ENCODE measurements at regions of chr15 and their contacts with region 1.

Region 1: DNA sequence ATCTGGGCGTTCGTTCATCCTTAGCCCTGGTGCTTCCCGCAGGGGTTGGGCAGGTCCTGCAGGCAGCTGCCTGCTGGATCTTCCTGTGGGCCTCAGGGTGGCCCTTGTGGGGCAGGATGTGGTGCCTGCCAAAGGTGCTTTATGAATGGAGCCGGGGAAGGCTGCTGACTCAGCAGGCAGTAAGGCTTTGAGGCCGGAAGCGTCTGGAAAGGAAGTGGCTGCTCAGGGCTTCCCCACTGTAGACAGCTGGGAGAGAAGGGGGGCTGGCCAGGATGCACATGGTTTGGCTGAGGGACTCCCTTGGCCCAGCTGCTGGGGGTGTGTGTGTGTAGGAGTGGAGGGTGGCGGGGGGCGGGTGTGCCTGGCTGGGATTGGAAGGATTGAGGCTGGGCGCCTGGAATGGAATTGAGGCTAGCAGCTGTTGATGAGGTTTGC is 12.9 kb downstream of the CD276 start:
- DNase-seq: peak; percentile 82
- H3K4me3 ChIP-seq: no peak overlapping the region
- H3K27ac ChIP-seq: peak overlapping the region; percentile 65
- H3K4me1 ChIP-seq: peaks cover 47% of the 10 kb centered on the region
- H3K27me3 ChIP-seq: no peaks in the 10 kb centered on the region
- CTCF ChIP-seq: no peak

Region 2: GRCh38 chr15:73593304-73594074 is 103.6 kb before region 1 on chr15:
- dilution Hi-C with region 1: loop called (anchors 25 kb)
- DNase-seq: no peak
- H3K4me3 ChIP-seq: no peak overlapping the region
- H3K27ac ChIP-seq: no peak overlapping the region
- H3K4me1 ChIP-seq: peaks cover 15% of the 10 kb centered on the region
- H3K27me3 ChIP-seq: no peaks in the 10 kb centered on the region
- CTCF ChIP-seq: no peak

Region 3: GRCh38 chr15:73617301-73617831 is 79.7 kb before region 1 on chr15:
- dilution Hi-C with region 1: no loop called
- DNase-seq: no peak
- H3K4me3 ChIP-seq: no peak overlapping the region
- H3K27ac ChIP-seq: no peak overlapping the region
- H3K4me1 ChIP-seq: peaks cover 2% of the 10 kb centered on the region
- H3K27me3 ChIP-seq: no peaks in the 10 kb centered on the region
- CTCF ChIP-seq: no peak

Measured in keratinocyte (primary cell).